ENCODE measurements at regions of chr22 and their contacts with region 1.

Region 1: GRCh38 chr22:17164392-17165024 is 5.4 kb upstream of the HDHD5 start:
- DNase-seq: peak; percentile 22
- H3K4me3 ChIP-seq: no peak overlapping the region
- H3K27ac ChIP-seq: no peak overlapping the region
- H3K4me1 ChIP-seq: no peaks in the 10 kb centered on the region
- H3K27me3 ChIP-seq: no peaks in the 10 kb centered on the region

Region 2: GRCh38 chr22:16804882-16805281 is 359.6 kb before region 1 on chr22:
- in situ Hi-C with region 1: no loop called
- DNase-seq: no peak
- H3K4me3 ChIP-seq: no peak overlapping the region
- H3K27ac ChIP-seq: no peak overlapping the region
- H3K4me1 ChIP-seq: peaks cover 20% of the 10 kb centered on the region
- H3K27me3 ChIP-seq: no peaks in the 10 kb centered on the region

Region 3: GRCh38 chr22:16917144-16918003 is 247.1 kb before region 1 on chr22:
- in situ Hi-C with region 1: no loop called
- DNase-seq: peak; percentile 68
- H3K4me3 ChIP-seq: no peak overlapping the region
- H3K27ac ChIP-seq: no peak overlapping the region
- H3K4me1 ChIP-seq: peaks cover 20% of the 10 kb centered on the region
- H3K27me3 ChIP-seq: no peaks in the 10 kb centered on the region; the same call in 1 of the 2 replicates

Region 4: DNA sequence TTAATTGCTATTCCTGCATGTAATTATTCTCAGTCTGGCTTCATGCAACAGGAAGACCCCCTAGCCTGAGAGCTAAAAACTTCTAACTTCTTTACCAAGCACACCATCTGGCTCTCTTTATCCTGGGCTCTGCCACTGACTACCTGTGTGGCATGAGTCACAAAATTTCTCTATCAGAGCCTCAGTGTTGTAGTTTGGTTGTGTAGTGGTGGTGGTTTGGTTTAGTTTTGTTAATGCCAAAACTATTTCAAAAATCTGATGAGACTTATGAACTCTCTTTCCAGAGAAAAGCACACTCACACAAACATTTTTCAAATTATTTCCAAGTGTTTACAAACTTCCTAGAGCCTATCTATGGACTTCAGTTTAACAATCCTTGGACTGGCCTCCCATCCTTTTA is 87.3 kb before region 1 on chr22:
- in situ Hi-C with region 1: loop called (anchors 10 kb)
- DNase-seq: peak; percentile 81
- H3K4me3 ChIP-seq: no peak overlapping the region
- H3K27ac ChIP-seq: peak overlapping the region; percentile 59
- H3K4me1 ChIP-seq: peaks cover 44% of the 10 kb centered on the region
- H3K27me3 ChIP-seq: no peaks in the 10 kb centered on the region

Measured in GM23248 (cell line).